ENCODE measurements at regions of chr2 and their contacts with region 1.

Region 1: GRCh38 chr2:163800951-163801381 is 65.2 kb upstream of the FIGN start:
- DNase-seq: no peak
- ATAC-seq: peak in 4 of 8 donors; percentile 28 to 49 (median 40)
- H3K4me3 ChIP-seq: no peak overlapping the region
- H3K27ac ChIP-seq: peak overlapping the region in 5 of 10 donors; percentile 15 to 41 (median 34)
- H3K4me1 ChIP-seq: peaks cover 0 to 33% (median 0%) of the 10 kb centered on the region in 9 donors
- H3K27me3 ChIP-seq: no peaks in the 10 kb centered on the region
- CTCF ChIP-seq: no peak

Region 2: GRCh38 chr2:163471947-163472346 is 329.0 kb before region 1 on chr2:
- intact Hi-C with region 1: loop called in 1 of 10 experiments (anchors 10 kb)
- DNase-seq: peak in 1 of 2 donors; percentile 13
- ATAC-seq: peak in 6 of 8 donors; percentile 44 to 75 (median 64)
- H3K4me3 ChIP-seq: no peak overlapping the region
- H3K27ac ChIP-seq: no peak overlapping the region
- H3K4me1 ChIP-seq: peaks cover 0 to 10% (median 0%) of the 10 kb centered on the region in 9 donors
- H3K27me3 ChIP-seq: no peaks in the 10 kb centered on the region
- CTCF ChIP-seq: peak in 8 of 9 donors; percentile 16 to 61 (median 46)